ENCODE measurements at regions of chr3 and their contacts with region 1.

Region 1: GRCh38 chr3:197749601-197750395 is at the start of gene FYTTD1:
- DNase-seq: peak; percentile 93 to 94 (median 94)
- ATAC-seq: peak; percentile 93
- H3K4me3 ChIP-seq: peak within 1 kb of the TSS; percentile 76
- H3K27ac ChIP-seq: peak within 1 kb of the TSS; percentile 86
- H3K4me1 ChIP-seq: peaks cover 30 to 33% of the 10 kb centered on the region in 2 experiments; a peak in 4 of 5 replicates
- H3K27me3 ChIP-seq: no peaks in the 10 kb centered on the region
- CTCF ChIP-seq: peak; percentile 59 to 69 (median 60)
- EP300 ChIP-seq: no peak; the same call in 1 of the 2 replicates
- POLR2A ChIP-seq: peak; percentile 77
- RAD21 ChIP-seq: peak; percentile 28 to 31; a peak in 2 of 4 replicates
- polyA plus RNA-seq, gene FYTTD1: 35.7 to 47.5 TPM

Region 2: GRCh38 chr3:197736491-197737318 is 13.1 kb before region 1 on chr3 and contains the start of gene RUBCN:
- CTCF ChIA-PET with region 1: no interaction called
- POLR2A ChIA-PET with region 1: interaction called, 17 read pairs
- in situ Hi-C with region 1: no loop called
- intact Hi-C with region 1: no loop called
- DNase-seq: peak; percentile 95 to 98 (median 96)
- ATAC-seq: peak; percentile 97
- H3K4me3 ChIP-seq: peak within 1 kb of the TSS; percentile 90
- H3K27ac ChIP-seq: peak within 1 kb of the TSS; percentile 76
- H3K4me1 ChIP-seq: peaks cover 24 to 25% of the 10 kb centered on the region in 2 experiments
- H3K27me3 ChIP-seq: no peaks in the 10 kb centered on the region
- CTCF ChIP-seq: no peak
- EP300 ChIP-seq: no peak
- POLR2A ChIP-seq: peak; percentile 83
- RAD21 ChIP-seq: no peak
- polyA plus RNA-seq, gene RUBCN: 8.4 to 9.3 TPM

Region 3: GRCh38 chr3:197791113-197791891 is 41.5 kb after region 1 on chr3 and contains the start of gene LRCH3:
- CTCF ChIA-PET with region 1: no interaction called
- POLR2A ChIA-PET with region 1: interaction called, 7 read pairs
- in situ Hi-C with region 1: no loop called
- intact Hi-C with region 1: loop called (anchors 1 kb)
- DNase-seq: peak; percentile 81 to 96 (median 90)
- ATAC-seq: peak; percentile 92
- H3K4me3 ChIP-seq: peak within 1 kb of the TSS; percentile 84
- H3K27ac ChIP-seq: peak within 1 kb of the TSS; percentile 95
- H3K4me1 ChIP-seq: peaks cover 10% of the 10 kb centered on the region in 2 experiments; a peak in 3 of 5 replicates
- H3K27me3 ChIP-seq: no peaks in the 10 kb centered on the region
- CTCF ChIP-seq: no peak
- EP300 ChIP-seq: no peak
- POLR2A ChIP-seq: peak; percentile 99
- RAD21 ChIP-seq: no peak
- polyA plus RNA-seq, gene LRCH3: 4.6 to 5.4 TPM

Region 4: DNA sequence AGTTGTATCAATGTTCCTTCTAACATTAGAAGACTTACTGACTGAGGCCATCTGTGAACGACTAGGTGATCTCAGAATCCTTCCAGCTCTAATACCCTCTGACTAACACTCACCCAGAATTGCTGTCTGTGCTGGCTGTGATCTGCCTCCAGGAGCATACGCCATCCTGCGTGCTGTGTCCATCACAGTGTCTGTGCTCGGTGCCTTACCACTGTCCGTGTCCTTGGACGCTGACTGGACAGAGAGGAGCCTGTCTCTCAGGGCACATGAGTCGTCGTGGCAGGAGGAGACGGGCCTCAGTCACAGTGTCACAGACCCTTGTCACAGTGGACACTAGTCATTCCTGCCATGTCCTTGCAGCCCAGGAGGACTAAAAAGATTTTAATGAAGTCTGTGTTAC is 293.3 kb after region 1 on chr3:
- CTCF ChIA-PET with region 1: no interaction called
- POLR2A ChIA-PET with region 1: no interaction called
- in situ Hi-C with region 1: no loop called
- intact Hi-C with region 1: no loop called
- DNase-seq: no peak
- ATAC-seq: peak; percentile 38; the same call in 1 of the 3 replicates
- H3K4me3 ChIP-seq: no peak overlapping the region
- H3K27ac ChIP-seq: no peak overlapping the region
- H3K4me1 ChIP-seq: peaks cover 0 to 6% of the 10 kb centered on the region in 2 experiments; a peak in 3 of 5 replicates
- H3K27me3 ChIP-seq: no peaks in the 10 kb centered on the region
- CTCF ChIP-seq: no peak
- EP300 ChIP-seq: no peak
- POLR2A ChIP-seq: no peak
- RAD21 ChIP-seq: no peak

Measured in K562 (cell line).